Aorta (tissue), 5 donors: ENCODE measurements at regions of chr2 and their contacts with region 1.

Region 1: GRCh38 chr2:211157856-211158463 is 601.6 kb downstream of the CPS1 start:
- DNase-seq: peak; percentile 71 to 89
- ATAC-seq: peak; percentile 83
- H3K4me3 ChIP-seq: no peak overlapping the region
- H3K27ac ChIP-seq: no peak overlapping the region
- H3K4me1 ChIP-seq: no peaks in the 10 kb centered on the region
- H3K27me3 ChIP-seq: no peaks in the 10 kb centered on the region

Region 2: DNA sequence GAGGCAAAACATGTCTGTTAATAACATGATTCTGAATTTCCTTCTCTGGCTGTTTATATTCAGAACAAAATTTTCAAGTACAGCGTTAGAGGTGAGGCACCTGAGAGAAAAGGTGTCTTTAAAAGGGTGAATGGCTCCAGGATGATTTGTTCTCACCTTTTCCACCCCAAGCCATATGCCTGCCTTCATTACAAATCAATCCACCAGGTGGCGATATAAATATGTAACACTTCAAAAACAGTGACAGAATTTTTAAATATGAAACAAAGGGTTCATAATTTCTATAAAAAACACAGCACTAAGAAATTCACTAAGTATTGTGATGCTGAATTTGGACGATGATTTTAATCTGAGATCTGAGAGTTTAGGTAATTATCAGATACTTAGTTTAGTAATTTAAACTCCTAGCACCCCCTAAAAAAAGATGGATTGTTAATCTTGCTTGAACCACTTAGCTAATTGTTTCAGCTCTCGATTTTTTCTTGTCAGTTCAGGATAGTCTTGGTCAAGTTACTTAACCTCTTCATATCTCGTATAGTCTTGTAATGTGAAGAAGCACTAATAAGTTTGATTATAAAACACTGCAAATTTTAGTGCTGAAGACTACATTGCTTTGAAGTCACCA is 72.8 kb before region 1 on chr2:
- intact Hi-C with region 1: loop called in 1 of 2 experiments (anchors 5 kb)
- DNase-seq: no peak
- ATAC-seq: no peak
- H3K4me3 ChIP-seq: no peak overlapping the region
- H3K27ac ChIP-seq: no peak overlapping the region
- H3K4me1 ChIP-seq: no peaks in the 10 kb centered on the region
- H3K27me3 ChIP-seq: no peaks in the 10 kb centered on the region